ENCODE measurements at regions of chr7 and their contacts with region 1.

Region 1: GRCh38 chr7:81499262-81500116 is 270.4 kb downstream of the HGF start:
- DNase-seq: peak; percentile 52 to 93
- ATAC-seq: peak; percentile 92 to 96
- H3K4me3 ChIP-seq: no peak overlapping the region
- H3K27ac ChIP-seq: peak overlapping the region; percentile 76 to 85
- H3K4me1 ChIP-seq: peaks cover 23% of the 10 kb centered on the region
- CTCF ChIP-seq: peak; percentile 96
- EP300 ChIP-seq: 0 out of 5 replicates have a peak, but pooled peaks of 1 of the 2 experiments have one; percentile 8
- POLR2A ChIP-seq: no peak
- RAD21 ChIP-seq: peak; percentile 93 to 97

Region 2: GRCh38 chr7:81410471-81411125 is 88.9 kb before region 1 on chr7:
- CTCF ChIA-PET with region 1: no interaction called
- POLR2A ChIA-PET with region 1: no interaction called
- DNase-seq: no peak
- ATAC-seq: no peak
- H3K4me3 ChIP-seq: no peak overlapping the region
- H3K27ac ChIP-seq: no peak overlapping the region
- H3K4me1 ChIP-seq: 0 out of 3 replicates have a peak, but pooled peaks cover 5% of the 10 kb centered on the region
- CTCF ChIP-seq: no peak
- EP300 ChIP-seq: no peak
- POLR2A ChIP-seq: no peak
- RAD21 ChIP-seq: no peak

Region 3: DNA sequence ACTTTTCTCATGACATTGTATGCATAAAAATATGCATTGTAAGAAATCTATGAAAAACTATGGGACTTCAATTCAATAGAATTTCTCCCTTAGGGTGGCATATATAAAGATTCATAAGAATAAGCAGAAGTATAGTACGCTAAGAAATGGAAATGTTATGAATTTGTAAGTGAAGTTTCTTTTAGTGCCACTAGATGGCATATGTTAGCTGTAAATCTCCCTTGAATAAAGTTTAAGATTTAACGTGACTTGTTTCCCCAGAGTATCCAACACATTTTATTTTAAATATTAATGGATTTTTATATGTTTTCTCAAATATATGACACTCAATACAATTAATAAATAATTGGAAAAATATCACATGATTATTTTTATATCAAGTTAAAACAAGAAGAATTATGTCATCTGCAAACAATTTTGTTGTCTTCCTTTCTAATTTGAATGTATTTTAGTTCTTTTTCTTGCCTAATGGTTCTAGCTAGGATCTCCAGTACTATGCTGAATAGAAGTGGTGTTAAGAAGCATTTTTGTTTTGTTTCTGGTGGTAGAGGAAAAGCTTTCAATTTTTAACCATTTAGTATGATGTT is 16.8 kb before region 1 on chr7:
- CTCF ChIA-PET with region 1: interaction called, 31 read pairs
- POLR2A ChIA-PET with region 1: no interaction called
- DNase-seq: peak; percentile 28 to 57
- ATAC-seq: peak in 1 of 2 experiments; percentile 69; a peak in 3 of 6 replicates
- H3K4me3 ChIP-seq: no peak overlapping the region
- H3K27ac ChIP-seq: no peak overlapping the region; a peak in 1 of 6 replicates
- H3K4me1 ChIP-seq: no peaks in the 10 kb centered on the region
- CTCF ChIP-seq: peak; percentile 76
- EP300 ChIP-seq: no peak
- POLR2A ChIP-seq: no peak
- RAD21 ChIP-seq: peak; percentile 73 to 87

Region 4: GRCh38 chr7:81710751-81711150 is 211.3 kb after region 1 on chr7:
- CTCF ChIA-PET with region 1: interaction called, 61 read pairs
- POLR2A ChIA-PET with region 1: no interaction called
- DNase-seq: no peak
- ATAC-seq: no peak
- H3K4me3 ChIP-seq: no peak overlapping the region
- H3K27ac ChIP-seq: no peak overlapping the region
- H3K4me1 ChIP-seq: peaks cover 9% of the 10 kb centered on the region; the same call in 2 of the 3 replicates
- CTCF ChIP-seq: no peak
- EP300 ChIP-seq: no peak
- POLR2A ChIP-seq: no peak
- RAD21 ChIP-seq: no peak

Region 5: GRCh38 chr7:81956520-81956919 is 457.0 kb after region 1 on chr7:
- CTCF ChIA-PET with region 1: interaction called, 16 read pairs
- POLR2A ChIA-PET with region 1: no interaction called
- DNase-seq: peak; percentile 5 to 59
- ATAC-seq: peak; percentile 71 to 76; a peak in 5 of 6 replicates
- H3K4me3 ChIP-seq: no peak overlapping the region
- H3K27ac ChIP-seq: no peak overlapping the region
- H3K4me1 ChIP-seq: no peaks in the 10 kb centered on the region
- CTCF ChIP-seq: peak; percentile 55
- EP300 ChIP-seq: no peak
- POLR2A ChIP-seq: no peak
- RAD21 ChIP-seq: peak; percentile 78 to 80

Region 6: DNA sequence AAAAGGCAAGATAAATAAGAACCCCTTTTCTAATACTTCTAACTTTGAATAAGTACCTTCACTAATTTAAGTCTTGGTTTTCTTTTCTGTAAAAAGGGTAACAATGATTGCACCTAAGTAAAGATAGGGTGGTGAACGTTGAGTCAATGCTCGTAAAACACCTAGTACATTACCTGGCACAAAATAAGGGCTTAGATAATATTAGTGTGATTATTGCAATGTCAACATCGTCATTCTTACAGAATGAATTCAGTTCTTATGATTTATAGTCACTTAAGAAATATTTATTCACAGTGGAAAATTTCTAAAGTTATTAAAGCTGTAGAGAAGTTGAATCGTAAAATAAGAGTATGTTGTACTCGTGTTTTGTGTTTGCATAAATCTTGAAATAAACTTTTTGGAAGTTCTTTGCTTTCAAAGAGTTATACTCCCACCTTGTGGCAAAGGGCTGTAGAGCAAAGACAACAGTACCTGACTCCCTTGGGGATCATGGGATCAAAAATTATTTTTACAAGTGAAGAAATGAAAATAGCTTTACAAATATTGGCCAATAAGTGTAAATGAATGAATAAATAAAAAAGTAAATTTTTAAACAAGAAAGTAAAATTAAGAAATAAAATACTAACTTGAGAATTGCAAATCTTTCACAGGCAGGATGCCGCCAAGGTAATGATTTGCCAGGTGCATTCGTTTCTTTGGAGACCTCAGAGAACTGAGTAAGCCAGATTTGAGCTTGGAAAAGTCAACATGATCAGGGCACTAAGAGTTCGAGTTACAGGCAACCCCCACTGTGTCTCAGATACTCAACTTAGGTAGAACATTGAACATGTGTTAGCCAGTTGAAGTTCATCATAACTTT is 1229.9 kb after region 1 on chr7:
- CTCF ChIA-PET with region 1: interaction called, 35 read pairs
- POLR2A ChIA-PET with region 1: no interaction called
- DNase-seq: peak; percentile 17 to 59
- ATAC-seq: peak in 1 of 2 experiments; percentile 72; a peak in 3 of 6 replicates
- H3K4me3 ChIP-seq: no peak overlapping the region
- H3K27ac ChIP-seq: no peak overlapping the region
- H3K4me1 ChIP-seq: peaks cover 13% of the 10 kb centered on the region; the same call in 2 of the 3 replicates
- CTCF ChIP-seq: peak; percentile 94
- EP300 ChIP-seq: no peak
- POLR2A ChIP-seq: no peak
- RAD21 ChIP-seq: peak; percentile 90 to 91

Measured in A549 (cell line).